Left cardiac atrium (tissue), 4 donors: ENCODE measurements at regions of chr3 and their contacts with region 1.

Region 1: DNA sequence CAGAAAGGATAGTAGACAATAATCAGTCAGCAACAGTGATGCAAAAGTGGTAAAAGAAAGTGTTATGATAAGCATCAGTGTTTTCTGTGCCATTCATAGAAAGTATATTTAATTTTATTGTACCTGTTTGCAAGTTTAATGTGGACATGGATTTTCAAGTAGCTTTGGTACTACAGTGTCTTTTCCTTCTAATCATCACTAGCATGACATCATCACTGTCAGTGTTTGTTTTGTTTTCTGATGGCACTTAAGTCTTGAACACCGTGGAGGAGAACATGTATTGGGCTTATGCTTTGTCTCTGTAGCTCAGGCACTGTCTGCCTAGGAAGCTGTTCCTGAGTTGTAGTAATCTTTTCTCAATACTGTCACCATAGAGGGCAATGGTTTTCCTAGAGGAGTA is 41.9 kb downstream of the SETD5 start:
- DNase-seq: no peak
- ATAC-seq: no peak

Region 2: GRCh38 chr3:8805774-8806173 is 633.6 kb before region 1 on chr3:
- intact Hi-C with region 1: no loop called
- DNase-seq: no peak
- ATAC-seq: no peak

Region 3: GRCh38 chr3:8963137-8963869 is 476.0 kb before region 1 on chr3 and contains the start of gene RAD18:
- intact Hi-C with region 1: loop called in 1 of 2 experiments (anchors 10 kb)
- DNase-seq: peak; percentile 93
- ATAC-seq: peak; percentile 96 to 98
- total RNA-seq, gene RAD18: 4.2 to 13.5 TPM

Region 4: GRCh38 chr3:9373465-9373864 is 65.9 kb before region 1 on chr3:
- intact Hi-C with region 1: loop called in 1 of 2 experiments (anchors 5 kb)
- DNase-seq: no peak
- ATAC-seq: no peak

Region 5: DNA sequence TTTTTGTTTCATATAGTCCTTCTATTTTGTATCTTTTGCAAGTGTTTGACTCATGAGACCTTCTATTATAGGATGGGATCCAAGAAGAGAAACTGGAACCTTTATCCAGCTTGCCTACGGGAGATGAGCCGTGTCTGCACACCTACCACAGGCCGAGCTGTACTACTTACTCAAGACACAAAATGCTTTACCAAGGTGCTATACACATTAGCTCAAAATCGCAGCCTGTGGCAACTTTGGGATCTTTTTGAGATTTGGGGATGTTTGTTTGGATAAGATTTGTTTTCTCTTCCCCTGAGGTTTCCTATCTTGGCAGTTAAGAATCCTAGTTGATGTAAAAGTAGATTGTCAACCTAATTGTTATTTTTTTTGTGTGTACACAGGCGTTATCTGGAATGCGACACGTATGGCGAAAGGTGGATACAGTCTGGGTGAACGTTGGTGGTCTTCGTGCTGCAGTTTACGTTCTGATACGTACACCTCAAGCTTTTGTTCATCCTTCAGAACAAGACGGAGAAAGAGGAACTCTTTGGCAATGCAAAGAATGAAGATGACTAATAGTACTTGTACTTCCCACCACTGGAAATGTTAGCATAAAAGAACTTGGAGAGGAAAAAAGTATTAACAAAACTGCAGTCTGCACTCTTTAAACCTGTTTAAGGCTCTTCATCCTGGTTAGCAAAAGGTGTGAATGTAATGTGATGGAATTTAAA is 55.0 kb before region 1 on chr3:
- intact Hi-C with region 1: loop called (anchors 5 kb)
- DNase-seq: no peak
- ATAC-seq: peak in 1 of 2 donors; percentile 16